ENCODE measurements at regions of chr14 and their contacts with region 1.

Region 1: GRCh38 chr14:66495218-66496098 is 9.3 kb downstream of the CCDC196 start:
- DNase-seq: peak in 9 of 14 experiments; percentile 5 to 74 (median 30)
- ATAC-seq: peak; percentile 62
- H3K4me3 ChIP-seq: no peak overlapping the region
- H3K4me3 Mint-ChIP-seq: peak overlapping the region; percentile 5
- H3K27ac ChIP-seq: no peak overlapping the region
- H3K27ac Mint-ChIP-seq: no peak overlapping the region
- H3K4me1 ChIP-seq: no peaks in the 10 kb centered on the region
- H3K4me1 Mint-ChIP-seq: peaks cover 24% of the 10 kb centered on the region
- H3K27me3 ChIP-seq: no peaks in the 10 kb centered on the region
- H3K27me3 Mint-ChIP-seq: no peaks in the 10 kb centered on the region
- CTCF ChIP-seq: peak; percentile 87

Region 2: GRCh38 chr14:66539034-66539433 is 43.6 kb after region 1 on chr14:
- CTCF ChIA-PET with region 1: no interaction called
- POLR2A ChIA-PET with region 1: no interaction called
- intact Hi-C with region 1: no loop called
- DNase-seq: peak in 3 of 14 experiments; percentile 1 to 34 (median 2)
- ATAC-seq: no peak
- H3K4me3 ChIP-seq: no peak overlapping the region
- H3K4me3 Mint-ChIP-seq: no peak overlapping the region
- H3K27ac ChIP-seq: no peak overlapping the region
- H3K27ac Mint-ChIP-seq: no peak overlapping the region
- H3K4me1 ChIP-seq: no peaks in the 10 kb centered on the region
- H3K4me1 Mint-ChIP-seq: peaks cover 32% of the 10 kb centered on the region
- H3K27me3 ChIP-seq: no peaks in the 10 kb centered on the region
- H3K27me3 Mint-ChIP-seq: no peaks in the 10 kb centered on the region
- CTCF ChIP-seq: no peak

Region 3: GRCh38 chr14:66568220-66568619 is 72.8 kb after region 1 on chr14:
- CTCF ChIA-PET with region 1: no interaction called
- POLR2A ChIA-PET with region 1: no interaction called
- intact Hi-C with region 1: loop called (anchors 5 to 10 kb)
- DNase-seq: peak in 2 of 14 experiments; percentile 1 to 2
- ATAC-seq: no peak
- H3K4me3 ChIP-seq: no peak overlapping the region
- H3K4me3 Mint-ChIP-seq: no peak overlapping the region
- H3K27ac ChIP-seq: no peak overlapping the region
- H3K27ac Mint-ChIP-seq: no peak overlapping the region
- H3K4me1 ChIP-seq: no peaks in the 10 kb centered on the region
- H3K4me1 Mint-ChIP-seq: peaks cover 27% of the 10 kb centered on the region
- H3K27me3 ChIP-seq: no peaks in the 10 kb centered on the region
- H3K27me3 Mint-ChIP-seq: no peaks in the 10 kb centered on the region
- CTCF ChIP-seq: no peak

Region 4: DNA sequence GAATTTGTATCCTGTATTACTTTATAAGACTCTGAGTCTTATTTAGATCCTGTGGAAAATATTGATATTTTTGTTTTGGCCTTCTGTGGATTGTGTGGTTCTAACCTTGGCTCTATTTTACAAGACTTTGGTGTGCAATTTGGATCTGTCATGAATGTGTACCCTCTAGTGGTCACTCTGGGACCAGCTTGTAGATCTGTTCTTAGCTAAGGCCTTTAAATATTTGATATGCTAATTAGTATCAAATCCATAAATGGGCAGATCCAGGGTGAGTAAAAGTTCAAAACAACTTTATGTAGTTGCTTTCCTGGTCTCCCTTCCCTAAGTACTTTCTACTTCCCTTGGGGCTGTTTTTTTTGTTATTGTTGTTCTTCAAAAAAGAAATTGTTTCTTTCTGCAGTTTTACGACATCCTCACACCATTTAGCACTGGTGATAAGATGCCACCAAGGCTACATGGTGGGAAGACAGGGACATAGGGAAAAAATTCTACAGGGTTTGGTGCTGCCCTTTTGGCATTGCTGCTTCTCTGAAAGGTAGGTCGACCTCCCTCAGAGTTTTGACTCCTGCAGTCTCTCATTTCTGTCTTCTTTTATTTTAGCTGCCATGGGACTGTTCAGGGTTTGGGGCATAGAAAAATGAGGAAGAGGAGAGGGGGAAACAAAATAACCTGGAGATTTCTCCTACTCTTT is 251.0 kb after region 1 on chr14:
- CTCF ChIA-PET with region 1: no interaction called
- POLR2A ChIA-PET with region 1: no interaction called
- intact Hi-C with region 1: loop called (anchors 5 to 10 kb)
- DNase-seq: peak in 4 of 14 experiments; percentile 4 to 30 (median 18)
- ATAC-seq: no peak
- H3K4me3 ChIP-seq: no peak overlapping the region
- H3K4me3 Mint-ChIP-seq: no peak overlapping the region
- H3K27ac ChIP-seq: no peak overlapping the region
- H3K27ac Mint-ChIP-seq: no peak overlapping the region
- H3K4me1 ChIP-seq: no peaks in the 10 kb centered on the region
- H3K4me1 Mint-ChIP-seq: no peaks in the 10 kb centered on the region
- H3K27me3 ChIP-seq: no peaks in the 10 kb centered on the region
- H3K27me3 Mint-ChIP-seq: no peaks in the 10 kb centered on the region
- CTCF ChIP-seq: peak; percentile 54

Region 5: GRCh38 chr14:67111022-67111421 is 615.6 kb after region 1 on chr14:
- CTCF ChIA-PET with region 1: no interaction called
- POLR2A ChIA-PET with region 1: no interaction called
- intact Hi-C with region 1: loop called in 1 of 2 experiments (anchors 5 kb)
- DNase-seq: no peak
- ATAC-seq: no peak
- H3K4me3 ChIP-seq: no peak overlapping the region
- H3K4me3 Mint-ChIP-seq: no peak overlapping the region
- H3K27ac ChIP-seq: no peak overlapping the region
- H3K27ac Mint-ChIP-seq: no peak overlapping the region
- H3K4me1 ChIP-seq: no peaks in the 10 kb centered on the region
- H3K4me1 Mint-ChIP-seq: no peaks in the 10 kb centered on the region
- H3K27me3 ChIP-seq: no peaks in the 10 kb centered on the region
- H3K27me3 Mint-ChIP-seq: no peaks in the 10 kb centered on the region
- CTCF ChIP-seq: no peak

Region 6: GRCh38 chr14:67285876-67286452 is 790.5 kb after region 1 on chr14:
- CTCF ChIA-PET with region 1: no interaction called
- POLR2A ChIA-PET with region 1: interaction called, 4 read pairs
- intact Hi-C with region 1: loop called in 1 of 2 experiments (anchors 2 kb)
- DNase-seq: peak in 3 of 14 experiments; percentile 48 to 55 (median 51)
- ATAC-seq: no peak
- H3K4me3 ChIP-seq: no peak overlapping the region
- H3K4me3 Mint-ChIP-seq: no peak overlapping the region
- H3K27ac ChIP-seq: no peak overlapping the region
- H3K27ac Mint-ChIP-seq: no peak overlapping the region
- H3K4me1 ChIP-seq: no peaks in the 10 kb centered on the region
- H3K4me1 Mint-ChIP-seq: no peaks in the 10 kb centered on the region
- H3K27me3 ChIP-seq: no peaks in the 10 kb centered on the region
- H3K27me3 Mint-ChIP-seq: no peaks in the 10 kb centered on the region
- CTCF ChIP-seq: peak; percentile 81

Region 7: GRCh38 chr14:67571272-67571850 is 1075.9 kb after region 1 on chr14:
- CTCF ChIA-PET with region 1: no interaction called
- POLR2A ChIA-PET with region 1: no interaction called
- intact Hi-C with region 1: no loop called
- DNase-seq: peak; percentile 54 to 81 (median 66)
- ATAC-seq: peak; percentile 93
- H3K4me3 ChIP-seq: no peak overlapping the region
- H3K4me3 Mint-ChIP-seq: no peak overlapping the region
- H3K27ac ChIP-seq: no peak overlapping the region
- H3K27ac Mint-ChIP-seq: no peak overlapping the region
- H3K4me1 ChIP-seq: peaks cover 3% of the 10 kb centered on the region
- H3K4me1 Mint-ChIP-seq: no peaks in the 10 kb centered on the region
- H3K27me3 ChIP-seq: no peaks in the 10 kb centered on the region
- H3K27me3 Mint-ChIP-seq: no peaks in the 10 kb centered on the region
- CTCF ChIP-seq: peak; percentile 87